ENCODE measurements at regions of chr9 and their contacts with region 1.

Region 1: DNA sequence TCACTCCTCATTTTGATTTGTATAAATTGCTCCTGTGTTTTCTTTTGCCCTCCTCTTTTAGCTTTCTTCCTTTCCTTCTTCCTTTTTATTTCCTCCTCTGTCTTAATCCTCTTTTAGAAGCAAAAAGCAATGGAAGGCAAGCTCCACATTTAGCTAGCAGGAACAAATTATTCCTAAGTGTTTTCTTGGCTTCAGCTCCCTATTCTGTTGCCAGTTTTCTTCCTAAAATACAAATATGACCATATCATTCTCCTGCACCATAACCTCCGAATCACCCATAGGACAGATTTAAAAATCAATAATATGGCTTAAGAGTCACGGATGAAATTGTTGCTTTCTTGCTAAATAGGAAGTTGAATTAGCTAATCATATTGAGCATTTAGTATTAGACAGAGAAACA is 49.4 kb downstream of the GRIN3A start:
- DNase-seq: no peak
- H3K4me3 ChIP-seq: no peak overlapping the region
- H3K27ac ChIP-seq: no peak overlapping the region
- H3K4me1 ChIP-seq: no peaks in the 10 kb centered on the region
- H3K27me3 ChIP-seq: no peaks in the 10 kb centered on the region
- CTCF ChIP-seq: no peak

Region 2: GRCh38 chr9:101376111-101376848 is 312.8 kb before region 1 on chr9:
- CTCF ChIA-PET with region 1: no interaction called
- dilution Hi-C with region 1: no loop called
- in situ Hi-C with region 1: no loop called
- intact Hi-C with region 1: no loop called
- DNase-seq: peak; percentile 19
- H3K4me3 ChIP-seq: no peak overlapping the region
- H3K27ac ChIP-seq: no peak overlapping the region
- H3K4me1 ChIP-seq: no peaks in the 10 kb centered on the region
- H3K27me3 ChIP-seq: no peaks in the 10 kb centered on the region
- CTCF ChIP-seq: no peak

Region 3: DNA sequence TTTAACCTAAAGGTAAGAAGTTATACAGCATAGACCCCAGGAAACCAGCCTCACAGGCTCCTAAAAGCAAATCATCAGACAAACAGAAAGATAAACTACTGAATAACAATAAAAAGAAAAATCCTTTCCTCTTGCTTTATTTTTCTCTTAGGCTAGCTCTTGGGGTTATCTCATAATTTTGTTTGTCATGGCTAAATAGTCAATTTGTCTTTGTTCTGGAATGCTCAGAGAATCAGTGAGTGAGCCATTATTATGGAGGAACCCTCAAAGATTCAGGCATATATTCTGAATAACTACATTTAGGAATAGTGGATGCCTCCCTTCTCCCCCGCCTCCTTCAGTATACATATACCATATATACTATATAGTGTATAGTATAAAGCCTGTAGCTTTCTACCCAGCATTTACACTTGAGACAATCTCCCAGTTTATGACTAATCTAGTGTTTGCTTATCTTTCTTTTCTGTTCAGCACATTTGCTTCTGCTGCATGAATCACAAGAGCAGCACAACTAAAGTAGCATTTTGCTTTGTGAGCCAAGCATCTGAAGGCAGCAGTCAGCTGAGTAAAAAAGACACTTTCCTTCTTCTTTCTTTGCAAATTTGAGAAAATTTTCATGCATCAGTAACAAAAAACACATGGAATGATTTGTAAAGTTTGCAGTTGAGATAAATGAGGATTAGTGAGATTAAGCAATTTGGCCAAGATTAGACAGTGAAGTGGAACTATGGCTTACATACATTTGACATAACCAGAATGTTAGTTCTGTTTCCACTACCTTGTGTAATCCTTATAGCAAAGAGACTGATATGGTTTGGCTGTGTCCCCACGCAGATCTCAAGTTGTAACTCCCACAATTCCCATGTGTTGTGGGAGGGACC is 49.0 kb before region 1 on chr9:
- CTCF ChIA-PET with region 1: no interaction called
- dilution Hi-C with region 1: loop called (anchors 5 kb)
- in situ Hi-C with region 1: no loop called
- intact Hi-C with region 1: no loop called
- DNase-seq: no peak
- H3K4me3 ChIP-seq: no peak overlapping the region
- H3K27ac ChIP-seq: no peak overlapping the region
- H3K4me1 ChIP-seq: no peaks in the 10 kb centered on the region
- H3K27me3 ChIP-seq: no peaks in the 10 kb centered on the region
- CTCF ChIP-seq: no peak

Measured in mammary epithelial cell (primary cell).